ENCODE measurements at regions of chr12 and their contacts with region 1.

Region 1: GRCh38 chr12:6285063-6285477 is 25.4 kb upstream of the PLEKHG6 start:
- DNase-seq: peak in 3 of 6 donors; percentile 55 to 74 (median 55)
- ATAC-seq: peak; percentile 62 to 91 (median 86)
- H3K4me3 ChIP-seq: no peak overlapping the region
- H3K27ac ChIP-seq: no peak overlapping the region
- H3K4me1 ChIP-seq: peaks cover 0 to 2% (median 0%) of the 10 kb centered on the region in 3 donors
- H3K27me3 ChIP-seq: no peaks in the 10 kb centered on the region
- CTCF ChIP-seq: peak; percentile 82 to 93 (median 88)

Region 2: GRCh38 chr12:6195665-6196535 is 89.2 kb before region 1 on chr12:
- intact Hi-C with region 1: loop called in 2 of 3 experiments (anchors 2 kb)
- DNase-seq: peak; percentile 80 to 93 (median 90)
- ATAC-seq: peak; percentile 77 to 90 (median 84)
- H3K4me3 ChIP-seq: no peak overlapping the region
- H3K27ac ChIP-seq: peak overlapping the region in 3 of 4 donors; percentile 9 to 59 (median 58)
- H3K4me1 ChIP-seq: peaks cover 0 to 10% (median 4%) of the 10 kb centered on the region in 3 donors
- H3K27me3 ChIP-seq: no peaks in the 10 kb centered on the region
- CTCF ChIP-seq: peak; percentile 89 to 93 (median 90)